Ascending aorta (tissue), 2 donors: ENCODE measurements at regions of chr16 and their contacts with region 1.

Region 1: DNA sequence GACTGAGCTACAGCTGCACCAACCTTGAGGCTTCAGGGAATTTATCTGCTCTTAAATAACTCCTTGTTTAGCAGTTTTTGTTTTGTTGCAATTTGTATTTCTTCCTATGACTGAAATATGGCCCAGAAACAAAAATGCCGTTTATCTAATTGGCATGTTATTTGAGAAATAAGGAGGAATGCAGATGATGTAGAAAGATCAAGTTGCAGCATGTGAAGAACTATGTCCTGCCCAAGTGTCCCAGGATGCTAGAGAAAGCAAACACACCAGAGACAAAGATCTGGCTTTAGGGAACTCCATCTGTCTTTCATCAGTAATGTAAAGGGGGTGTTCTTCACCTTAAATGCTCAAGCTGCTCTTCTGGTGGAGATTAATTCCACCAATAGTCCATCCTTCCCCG is 29.7 kb downstream of the USP31 start:
- DNase-seq: no peak
- H3K4me3 ChIP-seq: no peak overlapping the region
- H3K27ac ChIP-seq: peak overlapping the region; percentile 76 to 82
- H3K4me1 ChIP-seq: peaks cover 4 to 40% of the 10 kb centered on the region in 2 donors
- H3K27me3 ChIP-seq: no peaks in the 10 kb centered on the region
- CTCF ChIP-seq: no peak

Region 2: DNA sequence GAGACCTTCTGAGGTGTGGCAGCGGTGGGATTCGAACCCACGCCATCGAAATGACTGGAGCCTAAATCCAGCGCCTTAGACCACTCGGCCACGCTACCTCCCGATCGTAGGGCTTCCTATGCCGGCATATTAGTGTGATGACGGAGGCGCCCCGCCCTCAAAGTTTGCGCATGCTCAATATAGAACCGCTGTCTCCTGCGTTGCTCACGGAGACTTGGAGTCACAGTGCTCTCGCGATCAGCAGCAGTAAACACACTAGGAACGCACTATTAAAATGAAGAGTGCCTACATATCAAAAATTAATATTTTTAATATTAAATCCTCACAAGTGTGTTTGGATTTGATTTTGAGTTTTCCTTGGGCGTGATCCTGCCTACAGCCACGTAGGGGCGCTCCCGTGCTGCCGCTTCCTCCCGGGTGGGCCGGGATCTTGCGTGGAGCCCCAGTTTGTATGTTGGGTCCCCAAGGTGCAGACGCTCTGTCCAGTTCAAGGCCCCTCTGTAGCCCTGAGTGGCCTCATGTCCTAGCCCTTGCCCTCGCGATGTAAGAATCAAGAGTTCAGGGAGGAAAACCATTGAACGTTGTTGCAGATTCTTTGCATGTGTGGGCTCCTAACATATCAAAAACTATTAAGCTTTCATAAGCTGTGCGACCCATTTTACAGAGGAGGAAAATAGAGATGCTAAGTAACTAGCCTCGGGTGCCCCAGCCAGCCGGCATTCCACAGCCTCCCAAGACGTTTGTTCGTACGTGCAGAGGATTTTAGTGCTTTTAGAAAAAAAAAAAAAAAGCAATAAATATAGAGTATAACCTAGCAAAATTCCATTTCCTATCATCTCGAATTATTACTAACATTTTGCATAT is 923.6 kb before region 1 on chr16:
- intact Hi-C with region 1: no loop called
- DNase-seq: peak; percentile 77 to 96
- H3K4me3 ChIP-seq: peak overlapping the region; percentile 44 to 62
- H3K27ac ChIP-seq: peak overlapping the region; percentile 73 to 98
- H3K4me1 ChIP-seq: peaks cover 0 to 36% of the 10 kb centered on the region in 2 donors
- H3K27me3 ChIP-seq: no peaks in the 10 kb centered on the region
- CTCF ChIP-seq: peak; percentile 93 to 97 (median 94)

Region 3: DNA sequence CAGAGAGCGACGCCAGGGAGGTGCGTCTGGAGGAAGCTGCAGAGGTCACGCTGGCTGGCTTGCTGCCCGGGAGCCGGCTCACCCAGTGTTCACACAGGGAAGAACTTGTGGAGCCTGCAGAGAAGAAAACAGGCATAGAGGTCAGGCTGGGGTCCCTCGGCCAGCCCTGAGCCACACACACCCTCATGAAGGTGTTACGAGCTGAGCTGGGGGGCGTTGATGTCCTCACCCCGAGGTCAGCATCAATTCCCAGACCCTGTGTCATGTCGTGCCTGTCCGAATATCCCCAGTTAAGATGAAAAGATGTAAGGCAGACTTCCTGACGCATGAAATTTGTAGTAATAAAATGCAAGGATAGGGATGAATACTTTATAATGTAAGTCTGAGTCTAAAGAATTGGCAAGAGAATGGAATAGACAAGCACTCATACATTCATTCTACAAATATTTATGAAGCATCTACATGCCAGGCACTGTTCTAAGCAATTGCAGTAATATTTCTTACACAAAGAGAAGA is 47.4 kb before region 1 on chr16:
- intact Hi-C with region 1: loop called (anchors 5 kb)
- DNase-seq: peak; percentile 34 to 80
- H3K4me3 ChIP-seq: peak overlapping the region; percentile 23 to 47
- H3K27ac ChIP-seq: peak overlapping the region; percentile 74 to 85
- H3K4me1 ChIP-seq: peaks cover 2 to 21% of the 10 kb centered on the region in 2 donors
- H3K27me3 ChIP-seq: no peaks in the 10 kb centered on the region
- CTCF ChIP-seq: no peak

Region 4: GRCh38 chr16:23917621-23918020 is 798.1 kb after region 1 on chr16:
- intact Hi-C with region 1: no loop called
- DNase-seq: no peak
- H3K4me3 ChIP-seq: no peak overlapping the region
- H3K27ac ChIP-seq: no peak overlapping the region
- H3K4me1 ChIP-seq: no peaks in the 10 kb centered on the region
- H3K27me3 ChIP-seq: no peaks in the 10 kb centered on the region
- CTCF ChIP-seq: no peak